Activated naive CD4-positive, alpha-beta T cell treated with anti-CD3 and anti-CD28 coated beads for 36 hours (primary cell): ENCODE measurements at regions of chr14 and their contacts with region 1.

Region 1: GRCh38 chr14:54955143-54955542 is 52.5 kb upstream of the GCH1 start:
- DNase-seq: no peak
- H3K4me3 Mint-ChIP-seq: no peak overlapping the region
- H3K27ac Mint-ChIP-seq: no peak overlapping the region
- H3K4me1 Mint-ChIP-seq: no peaks in the 10 kb centered on the region
- H3K27me3 Mint-ChIP-seq: no peaks in the 10 kb centered on the region

Region 2: GRCh38 chr14:54532111-54533012 is 422.8 kb before region 1 on chr14:
- CTCF ChIA-PET with region 1: no interaction called
- intact Hi-C with region 1: loop called (anchors 10 kb)
- DNase-seq: no peak
- H3K4me3 Mint-ChIP-seq: no peak overlapping the region
- H3K27ac Mint-ChIP-seq: no peak overlapping the region
- H3K4me1 Mint-ChIP-seq: no peaks in the 10 kb centered on the region
- H3K27me3 Mint-ChIP-seq: no peaks in the 10 kb centered on the region

Region 3: GRCh38 chr14:54985156-54985555 is 30.0 kb after region 1 on chr14:
- CTCF ChIA-PET with region 1: no interaction called
- intact Hi-C with region 1: no loop called
- DNase-seq: no peak
- H3K4me3 Mint-ChIP-seq: no peak overlapping the region
- H3K27ac Mint-ChIP-seq: no peak overlapping the region
- H3K4me1 Mint-ChIP-seq: no peaks in the 10 kb centered on the region
- H3K27me3 Mint-ChIP-seq: no peaks in the 10 kb centered on the region